ENCODE measurements at regions of chr12 and their contacts with region 1.

Region 1: DNA sequence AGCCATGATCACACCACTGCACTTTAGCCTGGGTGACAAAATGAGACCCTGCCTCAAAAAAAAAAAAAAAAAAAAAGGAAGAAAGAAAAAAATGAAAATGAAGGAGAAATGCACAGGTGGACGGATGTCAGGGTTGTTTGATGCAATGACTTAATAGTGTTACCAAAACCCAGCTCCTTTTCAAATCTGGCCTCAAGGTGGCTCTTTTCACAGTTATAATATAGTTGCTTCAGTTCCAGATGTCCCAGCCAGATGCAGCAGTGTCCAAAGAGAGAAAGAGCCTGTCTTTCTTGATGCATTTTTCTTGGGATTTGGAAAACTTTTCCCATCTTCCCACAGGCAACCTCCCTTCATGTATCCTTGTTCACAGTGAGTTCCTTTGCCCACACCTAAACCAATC is 36.5 kb downstream of the KCNMB4 start:
- DNase-seq: no peak
- H3K4me3 ChIP-seq: no peak overlapping the region
- H3K27ac ChIP-seq: no peak overlapping the region
- H3K4me1 ChIP-seq: no peaks in the 10 kb centered on the region
- H3K27me3 ChIP-seq: no peaks in the 10 kb centered on the region
- CTCF ChIP-seq: no peak
- EP300 ChIP-seq: no peak
- POLR2A ChIP-seq: no peak
- RAD21 ChIP-seq: no peak; a peak in 1 of 4 replicates

Region 2: DNA sequence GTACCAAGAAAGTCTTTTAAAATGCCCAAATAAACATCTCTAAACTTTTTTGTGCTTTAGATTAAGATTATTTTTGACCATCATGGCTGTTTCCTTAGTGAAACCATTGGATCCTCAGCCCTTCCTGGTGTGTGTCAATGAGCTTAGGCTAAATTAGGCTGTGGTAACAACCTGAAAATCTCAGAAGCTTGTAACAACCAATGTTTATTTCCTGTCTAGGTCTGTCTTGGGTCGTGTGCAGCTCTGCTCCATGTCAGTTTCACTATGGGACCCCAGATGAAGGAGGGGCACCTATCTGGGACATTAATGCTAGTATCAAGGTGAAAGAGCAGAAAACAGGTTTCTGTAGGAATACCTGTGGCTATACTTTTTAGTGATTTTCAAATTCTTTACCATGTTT is 13.4 kb after region 1 on chr12:
- CTCF ChIA-PET with region 1: interaction called, 10 read pairs
- POLR2A ChIA-PET with region 1: interaction called, 3 read pairs
- DNase-seq: no peak
- H3K4me3 ChIP-seq: no peak overlapping the region
- H3K27ac ChIP-seq: no peak overlapping the region
- H3K4me1 ChIP-seq: no peaks in the 10 kb centered on the region
- H3K27me3 ChIP-seq: peaks cover 0 to 1% (median 0%) of the 10 kb centered on the region in 4 experiments; a peak in 1 of 7 replicates
- CTCF ChIP-seq: no peak
- EP300 ChIP-seq: no peak
- POLR2A ChIP-seq: no peak
- RAD21 ChIP-seq: no peak

Region 3: DNA sequence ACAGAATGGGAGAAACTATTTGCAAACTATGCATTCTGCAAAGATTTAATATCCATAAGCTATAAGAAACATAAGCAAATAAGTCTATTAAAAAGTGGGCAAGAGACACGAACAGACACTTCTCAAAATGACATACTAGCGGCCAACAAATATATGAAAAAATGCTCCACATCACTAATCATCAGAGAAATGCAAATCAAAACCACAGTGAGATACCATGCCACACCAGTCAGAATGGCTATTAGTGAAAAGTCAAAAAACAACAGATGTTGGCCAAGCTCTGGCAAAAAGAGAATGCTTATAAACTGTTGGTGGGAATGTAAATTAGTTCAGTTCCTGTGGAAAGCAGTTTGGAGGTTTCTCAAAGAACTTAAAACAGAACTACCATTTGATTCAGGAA is 84.8 kb after region 1 on chr12:
- CTCF ChIA-PET with region 1: no interaction called
- POLR2A ChIA-PET with region 1: no interaction called
- DNase-seq: no peak
- H3K4me3 ChIP-seq: no peak overlapping the region
- H3K27ac ChIP-seq: no peak overlapping the region
- H3K4me1 ChIP-seq: no peaks in the 10 kb centered on the region
- H3K27me3 ChIP-seq: no peaks in the 10 kb centered on the region
- CTCF ChIP-seq: no peak
- EP300 ChIP-seq: no peak
- POLR2A ChIP-seq: no peak
- RAD21 ChIP-seq: no peak